ENCODE measurements at regions of chr2 and their contacts with region 1.

Region 1: GRCh38 chr2:44616667-44617155 is 255.0 kb downstream of the CAMKMT start:
- DNase-seq: no peak
- ATAC-seq: peak; percentile 96
- H3K4me3 Mint-ChIP-seq: no peak overlapping the region
- H3K27ac Mint-ChIP-seq: no peak overlapping the region
- H3K4me1 Mint-ChIP-seq: peaks cover 13% of the 10 kb centered on the region
- H3K27me3 Mint-ChIP-seq: no peaks in the 10 kb centered on the region

Region 2: GRCh38 chr2:44550561-44550960 is 66.2 kb before region 1 on chr2:
- CTCF ChIA-PET with region 1: no interaction called
- POLR2A ChIA-PET with region 1: no interaction called
- intact Hi-C with region 1: loop called in 1 of 2 experiments (anchors 2 kb)
- DNase-seq: no peak
- ATAC-seq: peak; percentile 92
- H3K4me3 Mint-ChIP-seq: no peak overlapping the region
- H3K27ac Mint-ChIP-seq: peak overlapping the region; percentile 39
- H3K4me1 Mint-ChIP-seq: peaks cover 17% of the 10 kb centered on the region
- H3K27me3 Mint-ChIP-seq: no peaks in the 10 kb centered on the region

Region 3: GRCh38 chr2:44578421-44579135 is 38.1 kb before region 1 on chr2:
- CTCF ChIA-PET with region 1: interaction called, 12 read pairs
- POLR2A ChIA-PET with region 1: interaction called, 8 read pairs
- intact Hi-C with region 1: loop called (anchors 1 kb)
- DNase-seq: no peak
- ATAC-seq: peak; percentile 96
- H3K4me3 Mint-ChIP-seq: peak overlapping the region; percentile 34
- H3K27ac Mint-ChIP-seq: peak overlapping the region; percentile 83
- H3K4me1 Mint-ChIP-seq: peaks cover 32% of the 10 kb centered on the region
- H3K27me3 Mint-ChIP-seq: no peaks in the 10 kb centered on the region

Region 4: GRCh38 chr2:44649381-44649780 is 32.7 kb after region 1 on chr2:
- CTCF ChIA-PET with region 1: no interaction called
- POLR2A ChIA-PET with region 1: no interaction called
- intact Hi-C with region 1: no loop called
- DNase-seq: no peak
- ATAC-seq: no peak
- H3K4me3 Mint-ChIP-seq: no peak overlapping the region
- H3K27ac Mint-ChIP-seq: no peak overlapping the region
- H3K4me1 Mint-ChIP-seq: peaks cover 3% of the 10 kb centered on the region
- H3K27me3 Mint-ChIP-seq: no peaks in the 10 kb centered on the region

Region 5: DNA sequence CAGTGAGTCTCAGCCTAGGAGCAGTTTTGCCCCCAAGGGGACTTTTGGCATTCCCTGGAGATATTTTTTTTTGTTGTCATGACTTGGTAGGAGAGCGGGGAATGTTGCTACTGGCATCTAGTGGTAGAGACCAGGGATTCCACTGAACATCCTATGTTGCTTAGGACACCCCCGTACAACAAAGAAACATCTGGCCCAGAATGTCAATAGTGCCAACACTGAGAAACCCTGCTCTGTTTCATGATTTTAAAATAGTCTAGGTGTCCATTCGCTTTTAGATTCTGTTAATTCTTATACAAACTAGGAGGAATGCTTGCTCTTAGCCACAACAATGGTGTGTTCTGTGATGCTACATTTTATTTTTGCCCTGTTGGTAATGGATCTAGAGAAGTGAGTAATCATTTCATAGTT is 99.0 kb after region 1 on chr2:
- CTCF ChIA-PET with region 1: no interaction called
- POLR2A ChIA-PET with region 1: no interaction called
- intact Hi-C with region 1: no loop called
- DNase-seq: no peak
- ATAC-seq: no peak
- H3K4me3 Mint-ChIP-seq: no peak overlapping the region
- H3K27ac Mint-ChIP-seq: no peak overlapping the region
- H3K4me1 Mint-ChIP-seq: no peaks in the 10 kb centered on the region
- H3K27me3 Mint-ChIP-seq: no peaks in the 10 kb centered on the region